Naive thymus-derived CD4-positive, alpha-beta T cell (primary cell): ENCODE measurements at regions of chr11 and their contacts with region 1.

Region 1: DNA sequence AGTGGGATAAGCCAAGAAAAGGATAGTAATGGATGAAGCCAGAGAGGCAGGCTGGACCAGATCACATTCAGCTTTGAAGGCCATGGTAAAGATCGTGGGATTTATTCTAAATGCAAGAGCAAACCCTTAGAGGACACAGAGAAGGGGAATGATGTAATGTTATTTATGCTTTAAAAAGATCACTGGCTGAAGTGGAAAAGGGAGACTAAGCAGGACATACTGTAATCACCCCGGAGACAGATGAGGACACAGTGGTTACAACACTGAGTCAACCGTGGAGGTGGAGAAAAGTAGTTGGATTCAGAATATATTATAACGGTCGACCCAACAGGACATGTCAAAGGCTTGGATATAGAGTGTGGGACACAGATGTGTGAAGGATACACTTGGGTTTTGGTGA is 38.5 kb downstream of the CDON start:
- DNase-seq: no peak
- ATAC-seq: no peak
- H3K4me3 ChIP-seq: no peak overlapping the region
- H3K4me3 Mint-ChIP-seq: no peak overlapping the region
- H3K27ac ChIP-seq: no peak overlapping the region
- H3K27ac Mint-ChIP-seq: no peak overlapping the region
- H3K4me1 ChIP-seq: no peaks in the 10 kb centered on the region
- H3K4me1 Mint-ChIP-seq: no peaks in the 10 kb centered on the region
- H3K27me3 ChIP-seq: no peaks in the 10 kb centered on the region
- H3K27me3 Mint-ChIP-seq: no peaks in the 10 kb centered on the region

Region 2: DNA sequence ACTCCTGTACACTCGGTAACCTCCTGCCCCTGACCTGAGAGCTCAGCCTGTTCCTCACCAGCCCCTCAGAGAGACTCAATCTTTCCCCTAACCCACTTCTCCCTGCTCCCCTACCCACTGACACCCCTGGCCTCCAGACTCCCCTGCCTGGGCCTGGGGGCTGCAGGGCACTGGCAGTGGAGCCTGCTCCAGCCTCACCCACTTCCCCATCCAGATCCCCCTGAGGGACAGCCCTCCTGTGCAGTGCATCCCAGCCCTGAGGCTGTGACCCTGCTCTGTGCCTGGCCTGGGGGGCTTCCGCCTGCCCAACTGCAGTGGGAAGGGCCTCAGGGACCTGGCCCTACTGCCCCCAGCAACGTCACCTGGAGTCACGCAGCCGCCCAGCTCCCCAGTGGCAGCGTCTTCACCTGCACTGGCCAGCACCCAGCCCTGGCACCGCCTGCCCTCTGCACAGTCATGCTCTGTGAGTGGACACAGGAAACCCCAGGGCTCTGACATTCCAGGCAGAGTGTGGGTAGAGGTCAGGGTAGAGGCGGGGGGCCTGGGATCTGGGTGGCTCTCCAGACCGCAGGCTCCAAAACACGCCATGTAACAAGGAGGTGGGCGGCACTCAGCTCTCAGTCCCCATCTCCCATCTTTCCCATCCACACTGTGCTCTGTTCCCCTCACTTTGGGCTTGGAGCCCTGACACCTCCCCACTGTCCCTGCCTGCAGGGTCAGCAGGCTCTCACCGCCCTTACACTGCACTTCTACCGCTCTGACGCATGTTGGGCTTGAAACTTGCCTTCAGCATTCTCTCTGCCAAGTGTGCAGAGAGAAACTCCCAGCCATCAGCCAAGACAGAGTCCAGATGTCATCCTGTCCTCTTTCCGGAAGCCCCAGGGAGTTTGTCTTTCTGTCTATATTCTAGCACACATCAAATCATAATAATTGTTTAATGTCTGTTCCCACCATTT is 73.1 kb before region 1 on chr11:
- CTCF ChIA-PET with region 1: no interaction called
- POLR2A ChIA-PET with region 1: no interaction called
- intact Hi-C with region 1: no loop called
- DNase-seq: no peak
- ATAC-seq: no peak
- H3K4me3 ChIP-seq: no peak overlapping the region
- H3K4me3 Mint-ChIP-seq: no peak overlapping the region
- H3K27ac ChIP-seq: no peak overlapping the region
- H3K27ac Mint-ChIP-seq: no peak overlapping the region
- H3K4me1 ChIP-seq: no peaks in the 10 kb centered on the region
- H3K4me1 Mint-ChIP-seq: no peaks in the 10 kb centered on the region
- H3K27me3 ChIP-seq: no peaks in the 10 kb centered on the region
- H3K27me3 Mint-ChIP-seq: peaks cover 0 to 6% (median 4%) of the 10 kb centered on the region in 5 donors

Region 3: GRCh38 chr11:126012852-126013251 is 11.3 kb before region 1 on chr11:
- CTCF ChIA-PET with region 1: no interaction called
- POLR2A ChIA-PET with region 1: no interaction called
- intact Hi-C with region 1: loop called in 1 of 2 experiments (anchors 1 kb)
- DNase-seq: no peak
- ATAC-seq: no peak
- H3K4me3 ChIP-seq: no peak overlapping the region
- H3K4me3 Mint-ChIP-seq: no peak overlapping the region
- H3K27ac ChIP-seq: no peak overlapping the region
- H3K27ac Mint-ChIP-seq: no peak overlapping the region
- H3K4me1 ChIP-seq: no peaks in the 10 kb centered on the region
- H3K4me1 Mint-ChIP-seq: no peaks in the 10 kb centered on the region
- H3K27me3 ChIP-seq: no peaks in the 10 kb centered on the region
- H3K27me3 Mint-ChIP-seq: peaks cover 0 to 3% (median 0%) of the 10 kb centered on the region in 5 donors